Heart left ventricle (tissue), 16 donors: ENCODE measurements at regions of chr19 and their contacts with region 1.

Region 1: GRCh38 chr19:32599736-32600157 is 18.8 kb downstream of the PDCD5 start:
- DNase-seq: no peak
- ATAC-seq: peak in 2 of 4 donors; percentile 39 to 52
- H3K4me3 ChIP-seq: no peak overlapping the region
- H3K27ac ChIP-seq: no peak overlapping the region
- H3K4me1 ChIP-seq: no peaks in the 10 kb centered on the region
- H3K27me3 ChIP-seq: no peaks in the 10 kb centered on the region
- CTCF ChIP-seq: peak; percentile 69 to 89 (median 80)
- POLR2A ChIP-seq: no peak

Region 2: GRCh38 chr19:32543107-32543900 is 56.4 kb before region 1 on chr19:
- intact Hi-C with region 1: no loop called
- DNase-seq: no peak
- ATAC-seq: no peak
- H3K4me3 ChIP-seq: no peak overlapping the region
- H3K27ac ChIP-seq: no peak overlapping the region
- H3K4me1 ChIP-seq: no peaks in the 10 kb centered on the region
- H3K27me3 ChIP-seq: no peaks in the 10 kb centered on the region
- CTCF ChIP-seq: no peak
- POLR2A ChIP-seq: no peak

Region 3: GRCh38 chr19:32691291-32691951 is 91.7 kb after region 1 on chr19 and contains the start of gene NUDT19:
- intact Hi-C with region 1: loop called in 3 of 10 experiments (anchors 5 to 10 kb)
- DNase-seq: peak; percentile 87 to 94 (median 92)
- ATAC-seq: peak; percentile 97 to 98 (median 98)
- H3K4me3 ChIP-seq: peak within 1 kb of the TSS; percentile 52 to 90 (median 78)
- H3K27ac ChIP-seq: peak within 1 kb of the TSS; percentile 65 to 90 (median 84)
- H3K4me1 ChIP-seq: peaks cover 0 to 59% (median 44%) of the 10 kb centered on the region in 12 donors
- H3K27me3 ChIP-seq: no peaks in the 10 kb centered on the region
- CTCF ChIP-seq: peak in 1 of 12 donors; percentile 15
- POLR2A ChIP-seq: peak in 1 of 2 donors; percentile 46
- total RNA-seq, gene NUDT19: 15.2 to 31.3 (median 20.7) TPM

Region 4: DNA sequence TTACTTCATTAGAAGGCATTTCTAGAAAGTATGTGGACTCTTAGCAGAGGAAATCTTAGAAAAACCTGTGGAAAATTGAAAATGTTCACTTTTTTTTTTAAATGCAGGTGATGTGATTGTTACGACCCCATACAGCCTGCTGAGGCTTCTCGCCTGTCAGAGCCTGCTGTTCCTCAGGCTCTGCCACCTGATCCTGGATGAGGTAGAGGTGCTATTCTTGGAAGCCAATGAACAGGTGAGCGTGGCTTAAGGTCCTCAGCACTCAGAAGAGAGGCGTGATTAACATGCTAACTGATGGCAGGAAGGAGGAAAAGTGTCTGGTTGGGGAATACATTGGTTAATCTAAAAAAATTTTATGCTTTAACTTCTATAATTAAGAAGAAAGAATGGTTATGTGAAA is 198.5 kb after region 1 on chr19:
- intact Hi-C with region 1: no loop called
- DNase-seq: no peak
- ATAC-seq: no peak
- H3K4me3 ChIP-seq: no peak overlapping the region
- H3K27ac ChIP-seq: no peak overlapping the region
- H3K4me1 ChIP-seq: no peaks in the 10 kb centered on the region
- H3K27me3 ChIP-seq: peaks cover 0 to 8% (median 0%) of the 10 kb centered on the region in 9 donors
- CTCF ChIP-seq: no peak
- POLR2A ChIP-seq: no peak

Region 5: GRCh38 chr19:33110137-33110910 is 510.6 kb after region 1 on chr19:
- intact Hi-C with region 1: loop called in 1 of 10 experiments (anchors 10 kb)
- DNase-seq: no peak
- ATAC-seq: no peak
- H3K4me3 ChIP-seq: no peak overlapping the region
- H3K27ac ChIP-seq: no peak overlapping the region
- H3K4me1 ChIP-seq: no peaks in the 10 kb centered on the region
- H3K27me3 ChIP-seq: no peaks in the 10 kb centered on the region
- CTCF ChIP-seq: no peak
- POLR2A ChIP-seq: no peak